ENCODE measurements at regions of chr11 and their contacts with region 1.

Region 1: DNA sequence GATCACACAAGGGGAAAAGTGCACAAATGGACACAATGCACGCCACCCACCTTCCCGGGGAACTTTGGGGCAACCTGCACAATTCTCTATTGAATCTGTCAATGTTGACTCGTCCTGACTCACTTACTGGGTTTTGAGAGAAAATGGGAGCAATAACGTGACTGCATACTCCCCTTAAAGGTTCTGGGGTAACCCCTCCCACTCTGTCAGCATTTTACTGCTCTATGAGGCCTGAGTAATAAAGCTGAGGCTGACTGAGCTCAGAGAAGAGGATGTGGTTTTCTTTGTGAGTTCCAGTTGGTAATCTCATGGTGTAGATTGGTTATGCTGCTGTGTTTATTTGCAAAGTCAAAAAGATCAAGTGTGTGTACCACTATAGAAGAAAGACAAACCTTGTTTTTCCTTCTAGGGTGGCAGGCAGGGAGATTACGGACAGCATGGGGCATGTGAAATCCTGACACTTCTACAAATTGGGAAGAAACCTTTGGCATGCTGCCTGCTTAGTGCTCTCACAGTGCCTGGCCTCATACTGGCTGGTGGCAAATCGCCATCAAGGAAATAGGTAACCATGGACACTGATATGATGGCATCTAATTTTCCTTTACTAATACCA is 16.1 kb upstream of the APOA1 start:
- DNase-seq: peak; percentile 80
- H3K4me3 Mint-ChIP-seq: peak overlapping the region; percentile 7
- H3K27ac Mint-ChIP-seq: peak overlapping the region; percentile 88
- H3K4me1 Mint-ChIP-seq: peaks cover 59% of the 10 kb centered on the region
- H3K27me3 Mint-ChIP-seq: no peaks in the 10 kb centered on the region

Region 2: DNA sequence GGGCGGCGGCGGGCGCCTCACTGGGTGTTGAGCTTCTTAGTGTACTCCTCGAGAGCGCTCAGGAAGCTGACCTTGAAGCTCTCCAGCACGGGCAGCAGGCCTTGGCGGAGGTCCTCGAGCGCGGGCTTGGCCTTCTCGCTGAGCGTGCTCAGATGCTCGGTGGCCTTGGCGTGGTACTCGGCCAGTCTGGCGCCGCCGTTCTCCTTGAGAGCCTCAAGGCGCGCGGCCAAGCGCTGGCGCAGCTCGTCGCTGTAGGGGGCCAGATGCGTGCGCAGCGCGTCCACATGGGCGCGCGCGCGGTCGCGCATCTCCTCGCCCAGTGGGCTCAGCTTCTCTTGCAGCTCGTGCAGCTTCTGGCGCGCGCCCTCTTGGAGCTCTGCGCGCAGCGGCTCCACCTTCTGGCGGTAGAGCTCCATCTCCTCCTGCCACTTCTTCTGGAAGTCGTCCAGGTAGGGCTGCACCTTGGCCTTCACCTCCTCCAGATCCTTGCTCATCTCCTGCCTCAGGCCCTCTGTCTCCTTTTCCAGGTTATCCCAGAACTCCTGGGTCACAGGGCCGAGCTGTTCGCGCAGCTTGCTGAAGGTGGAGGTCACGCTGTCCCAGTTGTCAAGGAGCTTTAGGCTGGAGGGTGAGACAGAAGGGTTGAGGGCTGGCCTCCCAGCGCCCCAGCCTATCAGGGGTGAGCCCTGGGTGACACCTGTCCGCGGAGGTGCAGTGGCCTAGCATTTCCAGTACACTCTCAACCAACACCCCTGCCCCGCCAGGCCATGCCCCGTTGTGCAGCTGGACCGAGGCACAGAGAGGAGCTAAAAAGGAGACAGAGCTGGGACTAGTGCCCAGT is 17.6 kb before region 1 on chr11:
- CTCF ChIA-PET with region 1: interaction called, 38 read pairs
- intact Hi-C with region 1: loop called (anchors 1 kb)
- DNase-seq: peak; percentile 86
- H3K4me3 Mint-ChIP-seq: peak overlapping the region; percentile 69
- H3K27ac Mint-ChIP-seq: no peak overlapping the region
- H3K4me1 Mint-ChIP-seq: peaks cover 8% of the 10 kb centered on the region
- H3K27me3 Mint-ChIP-seq: peaks cover 4% of the 10 kb centered on the region

Region 3: GRCh38 chr11:116927163-116927974 is 73.8 kb after region 1 on chr11:
- CTCF ChIA-PET with region 1: interaction called, 3 read pairs
- intact Hi-C with region 1: loop called (anchors 1 kb)
- DNase-seq: peak; percentile 73
- H3K4me3 Mint-ChIP-seq: peak overlapping the region; percentile 34
- H3K27ac Mint-ChIP-seq: peak overlapping the region; percentile 75
- H3K4me1 Mint-ChIP-seq: peaks cover 61% of the 10 kb centered on the region
- H3K27me3 Mint-ChIP-seq: no peaks in the 10 kb centered on the region

Region 4: DNA sequence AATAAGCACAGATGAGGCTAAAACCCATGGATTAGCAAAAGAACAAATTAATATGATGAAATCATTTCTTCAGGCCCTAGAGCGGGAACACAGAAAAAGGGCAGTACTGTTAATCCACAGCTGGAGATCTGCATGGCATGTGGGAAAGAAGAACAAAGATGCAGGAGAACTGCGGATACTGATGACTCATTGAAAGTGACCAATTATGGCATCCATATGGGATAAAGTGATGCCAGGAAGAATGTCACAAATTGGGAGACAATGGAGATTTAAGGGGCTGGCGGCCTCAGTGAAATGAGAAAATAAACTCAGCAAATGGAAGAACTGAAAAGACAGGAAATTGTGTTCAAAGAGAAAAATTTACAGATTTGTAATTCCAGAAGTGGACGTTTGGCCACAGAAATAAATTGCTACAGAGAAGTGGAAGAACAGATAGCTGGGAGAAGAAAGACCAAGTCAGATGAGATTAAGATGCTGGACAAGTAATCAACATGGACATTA is 205.2 kb after region 1 on chr11:
- CTCF ChIA-PET with region 1: no interaction called
- intact Hi-C with region 1: loop called (anchors 2 kb)
- DNase-seq: no peak
- H3K4me3 Mint-ChIP-seq: no peak overlapping the region
- H3K27ac Mint-ChIP-seq: no peak overlapping the region
- H3K4me1 Mint-ChIP-seq: peaks cover 51% of the 10 kb centered on the region
- H3K27me3 Mint-ChIP-seq: no peaks in the 10 kb centered on the region

Region 5: DNA sequence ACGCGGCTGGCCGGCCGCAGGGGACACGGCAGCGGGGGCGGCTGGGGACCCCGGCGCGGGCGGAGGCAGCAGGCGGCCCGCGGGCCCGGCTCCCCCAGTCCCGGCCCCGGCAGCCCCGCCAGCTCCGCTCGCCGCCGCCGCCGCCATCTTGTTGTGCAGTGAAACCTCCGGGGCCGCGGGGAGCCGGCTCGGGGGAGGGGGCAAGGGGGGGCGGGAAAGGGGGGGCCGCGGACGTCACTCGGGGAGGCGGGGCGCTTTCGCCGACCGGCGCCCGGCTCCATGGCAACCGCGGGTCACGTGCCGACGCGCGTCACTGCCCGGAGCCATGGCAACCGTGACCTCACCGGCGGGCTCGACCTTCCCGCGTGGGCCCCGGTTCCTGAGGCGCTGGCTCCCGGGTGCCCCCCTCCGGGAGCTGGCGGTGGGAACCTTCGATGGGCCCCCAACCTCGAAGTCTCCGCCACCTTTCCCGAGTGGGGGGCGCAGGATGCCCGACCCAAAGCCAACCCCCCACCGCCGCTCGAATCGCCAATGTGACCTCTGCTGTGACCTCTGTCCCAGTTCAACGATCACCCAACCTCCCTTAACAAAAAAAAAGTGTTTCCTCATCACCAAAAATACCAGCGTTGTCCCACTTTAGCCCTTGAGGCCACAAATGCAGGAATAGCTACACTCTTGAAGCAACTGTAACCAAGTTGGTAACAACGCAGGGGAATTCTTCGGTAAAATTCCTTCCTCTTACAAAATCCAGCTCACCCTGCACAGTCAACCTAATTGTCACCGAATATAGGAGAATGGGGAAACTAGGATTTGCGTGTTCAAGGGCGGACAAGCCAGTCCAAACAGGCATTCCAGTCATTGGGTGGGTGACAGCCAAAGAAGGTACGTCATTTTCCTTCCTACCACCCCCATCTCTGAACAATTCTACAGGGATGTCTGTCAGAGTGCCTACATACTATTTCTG is 245.0 kb after region 1 on chr11 and contains the start of gene SIK3:
- CTCF ChIA-PET with region 1: interaction called, 4 read pairs
- intact Hi-C with region 1: loop called (anchors 1 kb)
- DNase-seq: peak; percentile 90
- H3K4me3 Mint-ChIP-seq: peak within 1 kb of the TSS; percentile 97
- H3K27ac Mint-ChIP-seq: peak within 1 kb of the TSS; percentile 89
- H3K4me1 Mint-ChIP-seq: peaks cover 47% of the 10 kb centered on the region
- H3K27me3 Mint-ChIP-seq: no peaks in the 10 kb centered on the region
- total RNA-seq, gene SIK3: 13.8 to 15.7 TPM

Region 6: GRCh38 chr11:117327567-117328374 is 474.2 kb after region 1 on chr11 and contains the start of gene CEP164:
- CTCF ChIA-PET with region 1: no interaction called
- intact Hi-C with region 1: loop called (anchors 1 kb)
- DNase-seq: peak; percentile 97
- H3K4me3 Mint-ChIP-seq: peak within 1 kb of the TSS; percentile 61
- H3K27ac Mint-ChIP-seq: peak within 1 kb of the TSS; percentile 71
- H3K4me1 Mint-ChIP-seq: peaks cover 3% of the 10 kb centered on the region
- H3K27me3 Mint-ChIP-seq: no peaks in the 10 kb centered on the region
- total RNA-seq, gene CEP164: 23.9 to 24.6 TPM